ENCODE measurements at regions of chr1 and their contacts with region 1.

Region 1: DNA sequence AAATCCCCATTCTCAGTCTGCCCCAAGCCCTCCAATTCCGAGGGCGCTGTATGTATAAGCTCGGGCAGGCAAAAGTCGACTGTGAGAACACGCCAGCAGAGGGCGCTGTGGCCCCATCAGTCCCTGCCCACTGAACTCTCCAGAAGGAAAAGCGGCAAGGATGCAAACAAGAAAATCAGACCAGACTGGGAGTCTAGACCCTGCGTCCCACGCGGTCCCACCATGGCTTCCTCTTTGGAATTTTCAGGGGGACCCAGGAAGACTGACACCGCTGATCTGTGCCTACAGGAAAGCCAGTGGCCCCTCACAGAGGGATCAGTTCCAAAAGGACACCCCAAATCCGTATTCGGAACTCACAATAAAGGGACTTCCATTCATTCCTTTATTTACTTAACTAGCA is 19.5 kb downstream of the TEX35 start:
- DNase-seq: peak; percentile 68
- ATAC-seq: peak; percentile 64
- H3K4me3 ChIP-seq: 0 out of 4 replicates have a peak overlapping the region, but pooled peaks of 1 of the 2 experiments have one; percentile 13
- H3K27ac ChIP-seq: no peak overlapping the region
- H3K4me1 ChIP-seq: peaks cover 27 to 55% of the 10 kb centered on the region in 2 experiments
- H3K27me3 ChIP-seq: no peaks in the 10 kb centered on the region
- CTCF ChIP-seq: peak; percentile 91 to 96 (median 92)
- POLR2A ChIP-seq: no peak
- RAD21 ChIP-seq: peak; percentile 96

Region 2: GRCh38 chr1:178267646-178268094 is 264.7 kb before region 1 on chr1:
- CTCF ChIA-PET with region 1: no interaction called
- POLR2A ChIA-PET with region 1: no interaction called
- RAD21 ChIA-PET with region 1: no interaction called
- intact Hi-C with region 1: no loop called
- DNase-seq: peak; percentile 7
- ATAC-seq: peak; percentile 74
- H3K4me3 ChIP-seq: peak overlapping the region in 1 of 2 experiments; percentile 37; a peak in 2 of 4 replicates
- H3K27ac ChIP-seq: peak overlapping the region; percentile 65; the same call in 1 of the 2 replicates
- H3K4me1 ChIP-seq: peaks cover 7 to 27% of the 10 kb centered on the region in 2 experiments
- H3K27me3 ChIP-seq: no peaks in the 10 kb centered on the region
- CTCF ChIP-seq: no peak
- POLR2A ChIP-seq: no peak
- RAD21 ChIP-seq: no peak

Region 3: GRCh38 chr1:178282949-178283367 is 249.4 kb before region 1 on chr1:
- CTCF ChIA-PET with region 1: no interaction called
- POLR2A ChIA-PET with region 1: no interaction called
- RAD21 ChIA-PET with region 1: no interaction called
- intact Hi-C with region 1: no loop called
- DNase-seq: peak; percentile 26
- ATAC-seq: peak; percentile 70
- H3K4me3 ChIP-seq: no peak overlapping the region
- H3K27ac ChIP-seq: no peak overlapping the region
- H3K4me1 ChIP-seq: no peaks in the 10 kb centered on the region; a peak in 1 of 4 replicates
- H3K27me3 ChIP-seq: no peaks in the 10 kb centered on the region
- CTCF ChIP-seq: peak; percentile 48 to 81 (median 55)
- POLR2A ChIP-seq: no peak
- RAD21 ChIP-seq: peak; percentile 84

Region 4: GRCh38 chr1:178310685-178311105 is 221.7 kb before region 1 on chr1:
- CTCF ChIA-PET with region 1: interaction called, 27 read pairs
- POLR2A ChIA-PET with region 1: interaction called, 4 read pairs
- RAD21 ChIA-PET with region 1: no interaction called
- intact Hi-C with region 1: loop called (anchors 2 kb)
- DNase-seq: peak; percentile 64
- ATAC-seq: peak; percentile 91
- H3K4me3 ChIP-seq: no peak overlapping the region
- H3K27ac ChIP-seq: no peak overlapping the region
- H3K4me1 ChIP-seq: peaks cover 8 to 15% of the 10 kb centered on the region in 2 experiments; a peak in 3 of 4 replicates
- H3K27me3 ChIP-seq: no peaks in the 10 kb centered on the region
- CTCF ChIP-seq: peak; percentile 58 to 88 (median 87)
- POLR2A ChIP-seq: no peak
- RAD21 ChIP-seq: peak; percentile 92

Region 5: DNA sequence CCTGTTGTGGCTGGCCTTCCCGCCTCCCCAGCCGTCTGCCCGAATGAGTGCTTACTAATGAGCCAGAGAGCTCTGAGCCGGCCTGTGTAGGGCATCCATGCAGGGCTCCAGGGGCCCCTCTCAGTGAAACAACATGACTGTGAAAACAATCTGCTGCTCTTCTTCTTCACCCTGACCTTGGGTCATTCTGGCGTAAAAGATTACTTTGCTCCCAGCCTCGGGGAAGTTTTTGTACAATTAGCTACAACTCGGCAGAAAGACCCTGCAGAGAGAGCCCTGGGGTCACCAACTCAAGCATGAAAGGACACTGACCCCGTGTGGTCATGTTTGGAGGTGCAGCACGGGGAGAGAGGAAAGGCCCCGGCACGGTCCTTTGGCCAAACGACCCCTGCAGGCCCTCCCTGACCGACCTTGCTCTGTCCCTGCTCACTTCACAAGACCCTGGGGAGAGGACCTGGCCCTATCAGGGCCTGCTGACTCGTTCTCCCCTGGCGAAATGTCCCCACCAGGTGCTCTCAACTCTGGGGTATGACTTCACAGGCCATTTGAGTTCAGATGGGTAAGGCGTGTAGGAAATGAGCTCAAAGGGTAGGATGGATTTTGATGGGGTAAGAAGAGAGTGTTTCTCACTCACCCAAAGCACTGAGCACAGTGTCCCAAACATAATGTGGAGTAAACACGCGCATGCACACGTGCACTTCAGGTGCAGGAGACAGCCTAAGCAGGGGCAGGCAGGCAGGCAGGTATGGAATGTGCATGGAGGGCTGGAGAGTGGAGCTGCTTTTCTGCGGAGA is 470.4 kb after region 1 on chr1:
- CTCF ChIA-PET with region 1: interaction called, 42 read pairs
- POLR2A ChIA-PET with region 1: no interaction called
- RAD21 ChIA-PET with region 1: interaction called, 4 to 5 read pairs
- intact Hi-C with region 1: loop called (anchors 2 kb)
- DNase-seq: no peak
- ATAC-seq: peak; percentile 91
- H3K4me3 ChIP-seq: no peak overlapping the region
- H3K27ac ChIP-seq: no peak overlapping the region
- H3K4me1 ChIP-seq: peaks cover 0 to 11% of the 10 kb centered on the region in 2 experiments; a peak in 3 of 4 replicates
- H3K27me3 ChIP-seq: no peaks in the 10 kb centered on the region
- CTCF ChIP-seq: peak; percentile 96 to 97 (median 97)
- POLR2A ChIP-seq: no peak
- RAD21 ChIP-seq: peak; percentile 98

Region 6: GRCh38 chr1:179229214-179230140 is 697.1 kb after region 1 on chr1 and contains the start of gene ABL2:
- CTCF ChIA-PET with region 1: no interaction called
- POLR2A ChIA-PET with region 1: no interaction called
- RAD21 ChIA-PET with region 1: no interaction called
- intact Hi-C with region 1: loop called (anchors 10 kb)
- DNase-seq: peak; percentile 31
- ATAC-seq: peak; percentile 66
- H3K4me3 ChIP-seq: peak within 1 kb of the TSS; percentile 68 to 75
- H3K27ac ChIP-seq: peak within 1 kb of the TSS; percentile 69; the same call in 1 of the 2 replicates
- H3K4me1 ChIP-seq: peaks cover 25 to 49% of the 10 kb centered on the region in 2 experiments
- H3K27me3 ChIP-seq: no peaks in the 10 kb centered on the region
- CTCF ChIP-seq: no peak
- POLR2A ChIP-seq: no peak
- RAD21 ChIP-seq: no peak
- total RNA-seq, gene ABL2: 22.9 TPM

Measured in HCT116 (cell line).